ENCODE measurements at regions of chr16 and their contacts with region 1.

Region 1: DNA sequence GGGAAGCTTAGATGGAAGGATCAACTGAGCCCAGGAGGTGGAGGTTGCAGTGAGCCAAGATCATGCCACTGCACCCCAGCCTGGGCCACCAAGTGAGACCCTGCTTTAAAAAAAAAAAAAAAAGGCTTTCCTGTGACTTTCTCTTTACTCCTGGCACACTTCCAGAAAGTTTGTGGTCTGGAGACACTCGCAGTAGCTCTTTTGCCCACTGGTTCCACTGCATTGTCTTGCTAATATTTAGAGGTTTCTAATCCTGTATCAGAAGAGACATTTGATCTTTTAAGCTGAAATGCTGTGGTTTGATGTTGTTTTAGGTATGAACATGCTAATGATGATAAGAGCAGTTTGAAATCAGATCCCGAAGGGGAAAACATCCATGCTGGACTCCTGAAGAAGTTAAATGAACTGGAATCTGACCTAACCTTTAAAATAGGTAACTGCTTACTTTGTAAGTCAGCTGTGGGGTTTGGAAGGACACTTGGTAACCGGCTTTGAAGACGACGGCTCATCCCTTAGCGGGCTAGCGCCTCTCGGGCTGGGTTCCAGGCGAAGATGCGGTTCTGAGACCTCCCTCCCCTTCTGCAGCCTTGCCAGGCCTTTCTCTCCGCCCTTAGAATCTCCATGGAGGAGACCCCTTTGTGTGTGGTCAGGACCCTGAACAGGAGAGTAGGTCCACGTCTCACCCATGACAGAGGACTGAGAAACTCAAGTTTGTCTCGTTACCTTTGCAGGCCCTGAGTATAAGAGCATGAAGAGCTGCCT is 23.1 kb downstream of the NTAN1 start:
- DNase-seq: no peak
- ATAC-seq: no peak
- H3K4me3 ChIP-seq: no peak overlapping the region
- H3K27ac ChIP-seq: peak overlapping the region in 7 of 12 donors; percentile 19 to 81 (median 66)
- H3K4me1 ChIP-seq: peaks cover 0 to 37% (median 21%) of the 10 kb centered on the region in 12 donors
- H3K27me3 ChIP-seq: no peaks in the 10 kb centered on the region
- CTCF ChIP-seq: no peak
- POLR2A ChIP-seq: no peak

Region 2: DNA sequence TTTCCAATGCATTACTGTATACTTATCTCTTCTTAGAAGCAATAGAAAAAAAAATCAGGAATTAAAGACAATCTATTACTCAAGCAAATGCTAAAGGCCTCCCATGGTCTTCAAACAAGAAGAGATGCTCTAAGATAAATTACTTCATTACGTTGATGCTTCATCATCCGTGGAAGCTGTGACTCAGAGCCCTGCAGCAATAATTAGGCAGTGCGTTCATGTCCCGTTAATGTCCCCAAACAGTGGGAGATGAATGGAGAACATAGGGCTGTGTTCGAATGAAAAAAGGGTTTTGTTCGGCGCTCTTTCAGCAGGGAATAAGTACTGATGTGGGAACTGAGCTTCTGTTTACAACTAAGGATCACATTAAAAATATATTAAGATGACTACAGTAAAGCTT is 73.8 kb before region 1 on chr16:
- intact Hi-C with region 1: loop called in 1 of 10 experiments (anchors 10 kb)
- DNase-seq: no peak
- ATAC-seq: no peak
- H3K4me3 ChIP-seq: no peak overlapping the region
- H3K27ac ChIP-seq: no peak overlapping the region
- H3K4me1 ChIP-seq: peaks cover 0 to 12% (median 2%) of the 10 kb centered on the region in 12 donors
- H3K27me3 ChIP-seq: no peaks in the 10 kb centered on the region
- CTCF ChIP-seq: no peak
- POLR2A ChIP-seq: no peak

Measured in heart left ventricle (tissue), 16 donors.